ENCODE measurements at regions of chr3 and their contacts with region 1.

Region 1: GRCh38 chr3:111717601-111718000 is 122.5 kb upstream of the ZBED2 start:
- DNase-seq: peak; percentile 84
- ATAC-seq: peak; percentile 92
- H3K4me3 ChIP-seq: no peak overlapping the region
- H3K27ac ChIP-seq: no peak overlapping the region
- H3K4me1 ChIP-seq: peaks cover 3% of the 10 kb centered on the region; the same call in 1 of the 2 replicates
- H3K27me3 ChIP-seq: no peaks in the 10 kb centered on the region
- CTCF ChIP-seq: peak; percentile 93
- POLR2A ChIP-seq: peak; percentile 46; the same call in 1 of the 2 replicates
- RAD21 ChIP-seq: peak; percentile 99

Region 2: DNA sequence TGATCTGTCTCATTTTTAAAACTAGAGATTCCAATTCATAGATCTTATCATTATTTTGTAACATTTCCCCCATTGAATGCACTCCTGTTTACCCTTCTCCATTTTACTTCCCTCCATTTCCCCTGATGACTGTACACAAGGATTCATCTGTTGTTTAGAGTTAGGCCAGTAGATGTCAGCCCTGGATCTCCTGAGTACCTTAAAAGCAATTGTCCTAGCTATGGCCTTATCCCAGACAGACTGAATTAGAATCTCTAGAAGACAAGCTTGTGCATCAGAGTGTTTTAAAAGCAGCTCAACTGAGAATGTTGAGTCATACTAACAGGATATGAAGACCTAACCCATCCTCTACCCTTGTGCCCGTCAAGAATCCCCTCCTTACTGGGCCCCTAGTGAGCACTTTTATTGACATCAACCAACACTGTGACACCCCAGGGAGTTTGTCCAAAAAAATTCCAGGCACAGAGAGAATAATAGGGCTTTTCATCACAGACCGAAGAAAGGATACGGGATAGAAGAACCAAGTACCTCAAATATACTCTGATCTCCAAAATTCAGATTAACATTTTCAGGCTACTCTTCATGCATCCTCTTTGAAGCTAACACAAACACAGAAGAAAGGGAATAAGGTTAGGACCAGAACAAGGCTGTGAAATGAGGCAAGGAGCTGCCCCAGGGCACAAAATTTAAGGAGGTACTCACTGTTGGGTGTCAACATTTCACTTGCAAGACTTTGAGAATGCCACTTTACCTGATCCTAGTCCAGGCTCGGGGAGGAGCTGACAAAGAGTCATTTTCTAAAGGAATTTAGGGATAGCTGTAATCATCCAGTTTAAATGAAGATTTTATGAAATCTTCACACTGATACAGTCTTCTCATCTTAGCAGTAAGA is 139.6 kb before region 1 on chr3:
- CTCF ChIA-PET with region 1: interaction called, 11 read pairs
- POLR2A ChIA-PET with region 1: no interaction called
- dilution Hi-C with region 1: no loop called
- in situ Hi-C with region 1: loop called (anchors 10 kb)
- intact Hi-C with region 1: no loop called
- DNase-seq: peak; percentile 93
- ATAC-seq: peak; percentile 94
- H3K4me3 ChIP-seq: no peak overlapping the region
- H3K27ac ChIP-seq: no peak overlapping the region
- H3K4me1 ChIP-seq: peaks cover 3% of the 10 kb centered on the region
- H3K27me3 ChIP-seq: no peaks in the 10 kb centered on the region
- CTCF ChIP-seq: peak; percentile 89
- POLR2A ChIP-seq: no peak
- RAD21 ChIP-seq: peak; percentile 95

Region 3: DNA sequence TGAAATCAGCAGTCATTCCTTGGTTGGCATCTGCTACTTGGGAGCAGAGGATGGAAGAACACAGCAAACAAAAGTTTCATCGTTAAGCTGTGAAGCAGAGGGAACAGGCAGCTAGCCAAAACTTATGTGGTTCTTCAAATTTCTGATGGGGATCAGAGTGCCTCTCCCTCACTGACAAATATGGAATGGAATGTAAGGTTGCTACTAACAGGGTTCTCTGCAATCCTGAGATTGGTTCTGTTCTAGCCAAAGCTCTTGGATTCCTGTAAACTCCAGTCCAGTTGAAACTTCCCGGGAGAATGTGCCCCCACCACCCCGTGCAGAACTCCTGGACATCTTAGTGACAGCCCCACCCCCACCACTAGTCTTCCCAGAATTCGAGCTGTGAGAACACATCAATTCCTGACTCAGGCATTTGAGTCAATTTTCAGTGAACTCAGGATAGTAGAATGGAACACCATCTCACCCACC is 85.6 kb after region 1 on chr3:
- CTCF ChIA-PET with region 1: no interaction called
- POLR2A ChIA-PET with region 1: no interaction called
- dilution Hi-C with region 1: no loop called
- in situ Hi-C with region 1: loop called (anchors 5 kb)
- intact Hi-C with region 1: no loop called
- DNase-seq: peak; percentile 97
- ATAC-seq: peak; percentile 95
- H3K4me3 ChIP-seq: no peak overlapping the region
- H3K27ac ChIP-seq: peak overlapping the region; percentile 59
- H3K4me1 ChIP-seq: peaks cover 4% of the 10 kb centered on the region
- H3K27me3 ChIP-seq: no peaks in the 10 kb centered on the region
- CTCF ChIP-seq: no peak
- POLR2A ChIP-seq: no peak
- RAD21 ChIP-seq: no peak; the same call in 1 of the 2 replicates

Region 4: GRCh38 chr3:111967651-111968274 is 250.2 kb after region 1 on chr3:
- CTCF ChIA-PET with region 1: interaction called, 17 read pairs
- POLR2A ChIA-PET with region 1: no interaction called
- dilution Hi-C with region 1: loop called (anchors 25 kb)
- in situ Hi-C with region 1: loop called (anchors 5 kb)
- intact Hi-C with region 1: loop called (anchors 1 kb)
- DNase-seq: peak; percentile 83
- ATAC-seq: peak; percentile 90
- H3K4me3 ChIP-seq: no peak overlapping the region
- H3K27ac ChIP-seq: no peak overlapping the region
- H3K4me1 ChIP-seq: peaks cover 1% of the 10 kb centered on the region; the same call in 1 of the 2 replicates
- H3K27me3 ChIP-seq: no peaks in the 10 kb centered on the region
- CTCF ChIP-seq: peak; percentile 90
- POLR2A ChIP-seq: peak; percentile 39; the same call in 1 of the 2 replicates
- RAD21 ChIP-seq: peak; percentile 96

Region 5: GRCh38 chr3:112043603-112044201 is 326.1 kb after region 1 on chr3:
- CTCF ChIA-PET with region 1: interaction called, 3 read pairs
- POLR2A ChIA-PET with region 1: no interaction called
- dilution Hi-C with region 1: no loop called
- in situ Hi-C with region 1: no loop called
- intact Hi-C with region 1: loop called (anchors 5 kb)
- DNase-seq: peak; percentile 79
- ATAC-seq: peak; percentile 99
- H3K4me3 ChIP-seq: peak overlapping the region; percentile 14; the same call in 1 of the 2 replicates
- H3K27ac ChIP-seq: no peak overlapping the region
- H3K4me1 ChIP-seq: peaks cover 1% of the 10 kb centered on the region; the same call in 1 of the 2 replicates
- H3K27me3 ChIP-seq: no peaks in the 10 kb centered on the region
- CTCF ChIP-seq: peak; percentile 90
- POLR2A ChIP-seq: no peak
- RAD21 ChIP-seq: peak; percentile 79

Measured in IMR-90 (cell line).